Activated T-helper 1 cell treated with anti-CD3 and anti-CD28 coated beads, Interleukin-12 subunit alpha, Interleukin-12 subunit beta, Interleukin-2, Interleukin-4 antibody, amounts not matched to agents 30 ng/mL and 10 ng/mL and 1 ng/mL, durations not matched to agents 14 hours and 24 hours and 36 hours (primary cell): ENCODE measurements at regions of chr1 and their contacts with region 1.

Region 1: DNA sequence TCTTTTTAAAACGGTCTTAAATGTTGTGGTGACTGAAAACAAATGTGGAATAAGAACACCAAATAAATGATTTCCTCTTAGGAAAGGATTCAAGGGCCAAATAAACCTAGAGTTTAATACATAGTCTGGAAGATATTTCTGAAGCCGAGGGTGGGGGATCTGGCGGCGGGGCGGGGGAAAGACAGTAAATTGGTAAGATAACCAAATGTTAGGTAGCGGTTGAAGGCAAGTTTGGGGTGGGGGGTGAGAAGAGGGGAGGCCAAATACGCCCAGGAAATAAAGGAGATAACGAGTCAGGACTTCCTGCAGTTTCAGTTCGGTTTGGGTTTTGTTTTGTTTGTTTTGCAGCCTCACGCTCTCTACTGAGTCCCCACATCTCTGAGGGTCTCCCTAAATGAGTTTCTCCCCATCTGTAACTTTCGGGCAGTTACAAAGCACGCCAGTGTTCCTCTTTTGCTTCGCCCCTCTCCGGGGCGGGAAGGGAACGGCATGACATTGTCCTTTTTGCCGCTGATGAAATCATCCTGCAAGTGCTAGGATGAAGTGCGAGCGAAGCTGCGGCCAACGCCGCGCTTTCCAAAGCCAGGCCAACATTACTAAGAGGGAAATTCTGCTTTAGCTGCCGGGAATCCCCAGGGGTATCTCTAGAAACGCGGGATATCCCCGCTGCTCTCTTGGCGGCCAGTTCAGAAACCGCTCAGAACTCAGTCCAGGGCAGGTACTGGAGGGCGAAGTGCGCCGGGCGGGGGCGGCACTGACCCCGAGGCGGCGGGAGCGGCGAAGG is 844 bp downstream of the NIBAN1 start:
- DNase-seq: no peak
- H3K4me3 Mint-ChIP-seq: peak overlapping the region; percentile 90
- H3K27ac Mint-ChIP-seq: peak overlapping the region; percentile 95
- H3K4me1 Mint-ChIP-seq: peaks cover 67% of the 10 kb centered on the region
- H3K27me3 Mint-ChIP-seq: peaks cover 15% of the 10 kb centered on the region

Region 2: GRCh38 chr1:183477986-183478781 is 1495.3 kb before region 1 on chr1:
- intact Hi-C with region 1: loop called (anchors 5 kb)
- DNase-seq: no peak
- H3K4me3 Mint-ChIP-seq: peak overlapping the region; percentile 70
- H3K27ac Mint-ChIP-seq: peak overlapping the region; percentile 85
- H3K4me1 Mint-ChIP-seq: peaks cover 65% of the 10 kb centered on the region
- H3K27me3 Mint-ChIP-seq: no peaks in the 10 kb centered on the region

Region 3: GRCh38 chr1:184386312-184387068 is 587.0 kb before region 1 on chr1 and contains the start of gene C1orf21:
- intact Hi-C with region 1: loop called (anchors 5 kb)
- DNase-seq: peak; percentile 75
- H3K4me3 Mint-ChIP-seq: peak within 1 kb of the TSS; percentile 86
- H3K27ac Mint-ChIP-seq: peak within 1 kb of the TSS; percentile 53
- H3K4me1 Mint-ChIP-seq: peaks cover 12% of the 10 kb centered on the region
- H3K27me3 Mint-ChIP-seq: peaks cover 71% of the 10 kb centered on the region
- total RNA-seq, gene C1orf21: 1.8 and 4.1 TPM in 2 replicates

Region 4: GRCh38 chr1:184881941-184882913 is 91.2 kb before region 1 on chr1:
- intact Hi-C with region 1: loop called (anchors 1 kb)
- DNase-seq: no peak
- H3K4me3 Mint-ChIP-seq: peak overlapping the region; percentile 32
- H3K27ac Mint-ChIP-seq: peak overlapping the region; percentile 78
- H3K4me1 Mint-ChIP-seq: peaks cover 23% of the 10 kb centered on the region
- H3K27me3 Mint-ChIP-seq: no peaks in the 10 kb centered on the region

Region 5: DNA sequence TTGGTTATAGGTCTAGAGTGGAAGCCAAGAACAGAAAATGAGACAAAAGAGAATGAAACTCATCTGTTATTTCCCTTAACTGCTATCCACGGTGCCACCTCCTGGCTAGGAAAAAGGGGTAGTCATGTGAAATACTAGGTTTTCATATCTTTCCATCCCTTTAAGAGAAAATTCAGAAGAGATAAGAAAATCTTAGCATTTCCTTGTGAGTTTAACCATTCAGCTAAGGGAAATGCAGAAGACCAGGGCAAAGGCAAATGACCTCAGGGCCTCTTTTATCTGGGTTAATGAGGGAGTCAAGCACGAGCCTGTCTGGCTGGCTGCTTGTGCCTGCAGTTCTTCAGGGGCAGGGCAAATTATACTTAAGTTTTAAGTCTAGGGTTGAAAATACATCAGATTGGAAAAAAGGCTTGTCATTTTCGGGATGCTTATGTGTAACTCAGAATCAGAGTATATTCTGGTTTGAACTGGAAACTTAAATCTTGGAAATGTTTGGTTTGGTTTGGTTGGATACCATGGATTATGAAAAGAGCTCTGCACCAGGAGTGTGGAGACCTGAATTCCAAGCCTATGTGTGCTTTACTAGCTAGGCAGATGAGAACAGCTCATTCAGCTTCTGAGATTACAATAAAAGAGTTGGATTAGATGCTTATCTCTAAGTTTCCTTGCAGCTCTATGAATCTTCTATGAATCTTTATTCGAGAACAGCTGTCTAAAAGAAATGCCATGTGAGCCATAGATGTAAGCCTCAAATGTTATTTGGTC is 19.1 kb before region 1 on chr1:
- intact Hi-C with region 1: loop called (anchors 1 kb)
- DNase-seq: no peak
- H3K4me3 Mint-ChIP-seq: peak overlapping the region; percentile 50
- H3K27ac Mint-ChIP-seq: peak overlapping the region; percentile 78
- H3K4me1 Mint-ChIP-seq: peaks cover 19% of the 10 kb centered on the region
- H3K27me3 Mint-ChIP-seq: peaks cover 2% of the 10 kb centered on the region

Region 6: DNA sequence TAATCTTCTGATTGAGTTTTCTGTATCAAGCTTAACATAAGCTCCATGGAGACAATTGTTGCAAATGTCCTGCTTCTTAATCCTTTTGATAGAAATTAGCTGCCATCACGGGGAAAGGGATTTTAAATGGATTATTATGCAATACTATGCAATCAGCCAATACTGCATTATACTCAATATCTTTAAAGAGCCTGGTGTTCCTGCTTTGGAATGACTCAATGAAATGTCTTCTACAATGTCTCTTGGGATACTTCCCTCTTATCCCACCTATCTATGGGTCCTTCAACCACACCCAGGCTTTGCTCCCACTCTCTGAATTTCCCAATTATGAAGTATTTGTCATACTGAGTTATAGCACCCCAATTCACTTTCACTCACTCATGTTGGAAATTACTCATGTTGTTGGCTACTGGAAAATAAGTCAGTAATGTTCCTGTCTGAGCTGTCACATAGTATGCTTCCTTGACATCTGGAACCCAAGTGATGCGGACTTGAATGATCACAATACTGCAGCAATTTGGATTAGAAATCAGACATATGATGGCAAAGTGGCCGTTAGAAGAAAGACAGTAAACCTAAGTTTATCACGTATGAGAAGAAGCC is 1316.6 kb after region 1 on chr1:
- intact Hi-C with region 1: loop called (anchors 5 kb)
- DNase-seq: no peak
- H3K4me3 Mint-ChIP-seq: peak overlapping the region; percentile 59
- H3K27ac Mint-ChIP-seq: peak overlapping the region; percentile 91
- H3K4me1 Mint-ChIP-seq: peaks cover 82% of the 10 kb centered on the region
- H3K27me3 Mint-ChIP-seq: no peaks in the 10 kb centered on the region